ENCODE measurements at regions of chr17 and their contacts with region 1.

Region 1: DNA sequence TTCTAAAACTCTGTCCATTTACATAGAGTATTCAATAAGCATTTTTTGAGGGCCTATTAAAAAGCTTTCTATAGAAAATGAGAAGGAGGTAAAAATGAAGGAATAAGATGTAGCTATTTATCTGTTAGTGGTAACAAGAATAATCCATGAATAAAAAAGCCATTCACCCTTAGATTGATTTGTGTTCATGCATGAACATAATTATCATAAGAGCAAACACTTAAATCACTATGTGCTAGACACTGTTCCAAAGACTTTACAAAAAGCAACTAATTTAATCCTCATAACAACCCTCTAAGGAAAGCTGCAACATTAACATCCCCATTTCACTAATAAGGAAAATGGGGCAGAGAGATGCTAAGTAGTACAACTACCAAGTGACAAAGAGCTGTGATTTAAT is 6.6 kb downstream of the CCDC47 start:
- DNase-seq: no peak
- H3K4me3 ChIP-seq: no peak overlapping the region
- H3K4me3 Mint-ChIP-seq: no peak overlapping the region
- H3K27ac ChIP-seq: no peak overlapping the region
- H3K27ac Mint-ChIP-seq: peak overlapping the region in 2 of 7 donors; percentile 45 to 57
- H3K4me1 ChIP-seq: peaks cover 30% of the 10 kb centered on the region
- H3K4me1 Mint-ChIP-seq: peaks cover 24 to 41% (median 32%) of the 10 kb centered on the region in 4 donors
- H3K27me3 ChIP-seq: no peaks in the 10 kb centered on the region
- H3K27me3 Mint-ChIP-seq: no peaks in the 10 kb centered on the region

Region 2: DNA sequence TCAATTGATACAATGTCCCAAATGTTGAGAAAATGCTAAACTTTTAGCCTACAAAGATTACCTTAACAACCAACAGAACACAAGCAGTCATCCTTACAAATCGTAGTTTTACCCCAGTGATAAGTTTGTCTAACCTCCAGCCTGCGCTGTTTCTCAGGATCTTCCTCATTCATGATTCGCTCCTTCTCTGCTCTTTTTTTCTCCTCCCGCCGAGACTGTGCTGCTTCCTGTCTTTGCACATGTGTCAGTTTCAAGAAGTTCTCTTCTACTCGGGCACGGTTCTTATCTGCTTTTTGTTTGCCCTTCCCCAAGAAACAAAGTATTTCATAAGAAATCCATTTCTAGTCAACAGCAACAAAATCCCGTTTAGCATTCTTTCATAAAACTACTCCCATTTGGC is 14.9 kb before region 1 on chr17:
- CTCF ChIA-PET with region 1: interaction called, 3 read pairs
- POLR2A ChIA-PET with region 1: interaction called, 3 read pairs
- intact Hi-C with region 1: loop called (anchors 2 kb)
- DNase-seq: peak in 4 of 5 donors; percentile 10 to 25 (median 18)
- H3K4me3 ChIP-seq: no peak overlapping the region
- H3K4me3 Mint-ChIP-seq: peak overlapping the region; percentile 25 to 78 (median 61)
- H3K27ac ChIP-seq: peak overlapping the region; percentile 33
- H3K27ac Mint-ChIP-seq: peak overlapping the region; percentile 69 to 93 (median 73)
- H3K4me1 ChIP-seq: peaks cover 10% of the 10 kb centered on the region
- H3K4me1 Mint-ChIP-seq: peaks cover 7 to 16% (median 8%) of the 10 kb centered on the region in 4 donors
- H3K27me3 ChIP-seq: no peaks in the 10 kb centered on the region
- H3K27me3 Mint-ChIP-seq: no peaks in the 10 kb centered on the region

Region 3: GRCh38 chr17:63974594-63975192 is 207.9 kb after region 1 on chr17:
- CTCF ChIA-PET with region 1: no interaction called
- POLR2A ChIA-PET with region 1: no interaction called
- intact Hi-C with region 1: no loop called
- DNase-seq: no peak
- H3K4me3 ChIP-seq: no peak overlapping the region
- H3K4me3 Mint-ChIP-seq: peak overlapping the region in 1 of 8 donors; percentile 63
- H3K27ac ChIP-seq: no peak overlapping the region
- H3K27ac Mint-ChIP-seq: peak overlapping the region in 3 of 7 donors; percentile 67 to 68 (median 68)
- H3K4me1 ChIP-seq: no peaks in the 10 kb centered on the region
- H3K4me1 Mint-ChIP-seq: peaks cover 0 to 6% (median 2%) of the 10 kb centered on the region in 4 donors
- H3K27me3 ChIP-seq: no peaks in the 10 kb centered on the region
- H3K27me3 Mint-ChIP-seq: no peaks in the 10 kb centered on the region

Measured in CD4-positive, alpha-beta memory T cell (primary cell).